Sigmoid colon (tissue), 7 donors: ENCODE measurements at regions of chr9 and their contacts with region 1.

Region 1: DNA sequence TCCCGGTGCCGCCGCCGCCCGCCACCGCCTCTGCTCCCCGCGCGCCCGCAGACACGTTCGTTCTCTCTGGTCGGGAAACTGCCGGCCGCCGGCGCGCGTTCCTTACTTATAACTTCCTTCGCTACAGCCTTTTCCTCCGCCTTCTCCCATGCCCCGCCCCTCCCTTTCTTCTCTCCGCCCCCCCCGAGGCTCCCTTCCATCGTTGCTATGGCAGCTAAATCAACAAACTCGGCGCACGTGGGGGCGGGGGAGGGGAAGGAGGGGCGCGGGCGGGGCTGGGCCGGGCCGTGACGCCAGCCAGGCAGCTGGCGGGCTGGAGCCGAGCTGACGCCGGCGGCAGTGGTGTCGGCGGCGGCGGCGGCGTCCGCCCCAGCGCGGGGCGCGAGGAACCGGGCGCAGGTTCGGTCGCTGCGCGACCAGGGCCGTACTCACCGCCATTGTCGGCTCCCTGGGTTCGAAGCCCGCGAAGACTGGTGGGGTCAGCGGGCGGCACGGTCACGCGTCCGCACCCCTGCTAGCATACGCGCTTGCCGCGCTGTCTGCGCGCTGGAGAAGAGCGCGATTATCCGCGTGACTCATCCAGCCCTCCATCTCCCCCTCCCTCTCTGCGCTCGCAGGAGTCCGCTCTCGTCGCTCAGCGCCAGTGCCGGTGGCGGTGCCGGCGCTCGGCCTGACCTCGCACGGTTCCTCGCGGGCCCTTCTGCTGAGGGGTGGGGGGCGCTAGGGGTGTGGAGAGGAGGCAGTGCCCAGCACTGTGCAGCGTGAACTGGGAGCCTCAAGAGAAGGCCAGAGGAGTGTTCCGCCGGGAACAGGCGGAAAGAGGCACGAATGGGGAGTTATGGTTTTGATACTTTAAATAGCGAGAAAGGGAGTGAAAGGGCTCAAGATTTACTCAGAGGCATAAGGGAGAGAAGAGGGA is at the start of gene KLF4:
- DNase-seq: peak; percentile 97
- H3K4me3 ChIP-seq: peak within 1 kb of the TSS; percentile 53 to 86 (median 65)
- H3K27ac ChIP-seq: peak within 1 kb of the TSS; percentile 84 to 96 (median 92)
- H3K4me1 ChIP-seq: peaks cover 0 to 38% (median 27%) of the 10 kb centered on the region in 4 donors
- H3K27me3 ChIP-seq: no peaks in the 10 kb centered on the region
- CTCF ChIP-seq: no peak
- EP300 ChIP-seq: peak in 3 of 4 donors; percentile 28 to 80 (median 74)
- POLR2A ChIP-seq: peak; percentile 38 to 58
- total RNA-seq, gene KLF4: 22.8 to 61.8 (median 34.7) TPM

Region 2: DNA sequence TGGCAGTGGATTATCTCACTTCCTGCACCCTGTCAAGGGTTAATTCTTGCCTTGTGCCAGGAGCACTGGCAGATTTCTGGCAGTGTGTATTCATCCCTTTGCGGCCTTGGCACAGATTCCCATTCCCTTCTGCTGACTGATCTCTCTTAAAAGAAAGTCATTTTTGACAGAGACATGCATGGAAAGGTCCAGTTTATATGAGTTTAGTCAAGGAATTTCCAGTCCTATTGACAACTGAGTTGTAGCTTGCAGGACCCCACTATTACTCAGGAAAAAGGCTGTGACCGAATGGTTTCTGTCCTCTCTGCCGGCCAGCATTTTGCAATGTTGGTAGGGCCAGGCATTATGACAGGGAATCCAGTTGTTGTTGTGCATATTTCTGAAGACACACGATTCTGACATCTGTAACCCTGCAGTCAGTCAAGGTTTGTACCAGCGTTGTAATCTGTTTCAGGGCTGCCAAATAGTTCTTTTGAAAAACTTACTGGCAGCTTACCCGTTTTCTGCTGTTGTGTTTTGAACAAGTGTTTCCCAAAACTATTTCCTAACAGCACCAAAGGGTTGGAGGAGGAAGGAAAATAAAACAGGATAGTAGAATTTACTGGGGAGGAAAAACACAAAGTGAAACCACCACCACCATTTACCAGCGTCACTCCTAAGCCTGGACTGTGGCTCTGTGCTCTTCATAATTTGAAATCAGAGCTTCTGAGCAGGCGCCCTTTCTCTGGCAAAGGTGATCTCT is 243.0 kb after region 1 on chr9:
- intact Hi-C with region 1: loop called (anchors 5 kb)
- DNase-seq: peak; percentile 82
- H3K4me3 ChIP-seq: peak overlapping the region in 3 of 4 donors; percentile 10 to 22 (median 14)
- H3K27ac ChIP-seq: peak overlapping the region; percentile 70 to 81 (median 80)
- H3K4me1 ChIP-seq: peaks cover 0 to 38% (median 18%) of the 10 kb centered on the region in 4 donors
- H3K27me3 ChIP-seq: no peaks in the 10 kb centered on the region
- CTCF ChIP-seq: no peak
- EP300 ChIP-seq: peak in 1 of 4 donors; percentile 6
- POLR2A ChIP-seq: no peak

Region 3: DNA sequence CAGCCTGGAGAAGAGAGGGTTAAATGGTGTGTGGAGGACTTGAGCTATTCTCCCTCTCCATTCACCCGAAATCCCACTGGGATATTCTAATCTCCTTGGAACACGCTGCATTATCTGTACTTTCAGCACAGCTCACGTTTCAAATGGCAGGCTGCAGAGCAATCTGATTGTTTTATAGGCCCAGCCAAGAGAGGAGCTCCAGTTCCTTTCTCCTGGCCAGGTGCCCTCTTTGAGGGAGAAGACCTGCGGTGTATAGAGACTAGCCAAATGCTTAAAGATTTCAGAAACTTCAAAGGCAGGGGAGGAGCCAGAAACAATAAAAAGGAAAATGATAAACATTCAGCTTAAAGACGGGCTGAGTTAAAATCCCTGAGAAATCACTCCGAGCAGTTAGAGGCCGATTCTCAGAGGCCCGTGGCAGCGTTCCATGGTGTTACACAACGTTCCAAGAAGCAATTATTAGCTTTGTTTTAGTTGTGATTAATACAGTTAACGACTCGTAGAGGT is 563.7 kb after region 1 on chr9:
- intact Hi-C with region 1: loop called (anchors 5 kb)
- DNase-seq: peak; percentile 92
- H3K4me3 ChIP-seq: no peak overlapping the region
- H3K27ac ChIP-seq: peak overlapping the region; percentile 59 to 77 (median 74)
- H3K4me1 ChIP-seq: peaks cover 0 to 68% (median 57%) of the 10 kb centered on the region in 4 donors
- H3K27me3 ChIP-seq: no peaks in the 10 kb centered on the region
- CTCF ChIP-seq: no peak
- EP300 ChIP-seq: peak in 2 of 4 donors; percentile 45 to 56
- POLR2A ChIP-seq: no peak

Region 4: DNA sequence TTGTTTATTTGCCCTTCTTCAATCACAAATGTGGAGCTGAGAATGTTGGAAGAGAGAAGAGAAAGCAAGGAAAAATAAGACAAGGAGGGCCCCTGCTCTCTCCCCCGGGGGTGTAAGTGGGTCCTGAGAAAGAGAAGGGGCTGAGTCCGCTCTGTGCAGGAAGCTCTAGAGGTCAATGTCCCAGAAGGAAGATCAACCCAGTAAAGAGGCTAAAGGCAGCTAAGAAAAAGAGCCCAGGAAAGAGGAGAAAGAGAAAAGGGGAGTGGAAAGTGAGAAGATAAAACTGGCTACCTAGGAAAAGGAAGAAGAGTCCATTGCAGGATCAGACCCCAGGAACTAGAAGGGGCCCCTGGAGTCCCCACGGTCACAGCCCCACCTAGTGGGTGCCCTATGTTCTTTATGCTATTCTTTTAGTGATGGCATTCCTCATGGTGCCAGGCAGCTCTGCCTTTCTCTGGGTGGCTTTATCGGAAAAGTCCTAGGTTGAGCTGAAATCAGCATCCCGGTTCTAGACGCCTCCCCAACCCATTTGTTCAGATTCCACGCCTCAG is 782.5 kb after region 1 on chr9:
- intact Hi-C with region 1: loop called (anchors 5 kb)
- DNase-seq: peak; percentile 72
- H3K4me3 ChIP-seq: peak overlapping the region in 2 of 4 donors; percentile 2 to 18
- H3K27ac ChIP-seq: peak overlapping the region; percentile 23 to 50 (median 35)
- H3K4me1 ChIP-seq: peaks cover 0 to 15% (median 6%) of the 10 kb centered on the region in 4 donors
- H3K27me3 ChIP-seq: no peaks in the 10 kb centered on the region
- CTCF ChIP-seq: peak in 3 of 4 experiments; percentile 44 to 69 (median 50)
- EP300 ChIP-seq: no peak
- POLR2A ChIP-seq: no peak